ENCODE measurements at regions of chr10 and their contacts with region 1.

Region 1: DNA sequence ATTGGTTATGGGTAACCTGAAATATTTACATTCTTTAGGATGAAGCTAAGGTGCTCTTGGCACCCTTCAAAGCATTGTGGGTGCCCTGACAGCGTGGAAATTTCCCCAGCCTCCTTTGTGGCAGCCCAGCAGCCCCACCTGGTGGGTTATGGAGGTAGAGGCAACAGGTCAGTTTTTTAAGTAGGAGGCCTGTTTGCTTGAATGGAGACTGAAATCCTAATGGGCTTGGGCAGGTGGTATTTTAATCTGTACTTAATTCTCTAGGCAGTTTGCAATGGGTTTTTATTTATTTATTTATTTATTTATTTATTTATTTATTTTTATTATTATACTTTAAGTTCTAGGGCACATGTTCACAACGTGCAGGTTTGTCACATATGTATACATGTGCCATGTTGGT is 139.4 kb downstream of the EPC1 start:
- DNase-seq: peak; percentile 79 to 84
- H3K4me3 ChIP-seq: no peak overlapping the region
- H3K4me3 Mint-ChIP-seq: no peak overlapping the region
- H3K27ac Mint-ChIP-seq: no peak overlapping the region
- H3K4me1 ChIP-seq: peaks cover 5% of the 10 kb centered on the region; the same call in 1 of the 2 replicates
- H3K4me1 Mint-ChIP-seq: peaks cover 7% of the 10 kb centered on the region
- H3K27me3 ChIP-seq: no peaks in the 10 kb centered on the region
- H3K27me3 Mint-ChIP-seq: no peaks in the 10 kb centered on the region
- CTCF ChIP-seq: peak; percentile 90 to 97

Region 2: GRCh38 chr10:31864834-31865518 is 342.6 kb before region 1 on chr10:
- CTCF ChIA-PET with region 1: interaction called, 5 read pairs
- POLR2A ChIA-PET with region 1: no interaction called
- intact Hi-C with region 1: loop called (anchors 1 kb)
- DNase-seq: peak in 1 of 2 experiments; percentile 26
- H3K4me3 ChIP-seq: no peak overlapping the region
- H3K4me3 Mint-ChIP-seq: peak overlapping the region; percentile 9
- H3K27ac Mint-ChIP-seq: peak overlapping the region; percentile 5
- H3K4me1 ChIP-seq: peaks cover 24% of the 10 kb centered on the region
- H3K4me1 Mint-ChIP-seq: peaks cover 37% of the 10 kb centered on the region
- H3K27me3 ChIP-seq: no peaks in the 10 kb centered on the region
- H3K27me3 Mint-ChIP-seq: no peaks in the 10 kb centered on the region
- CTCF ChIP-seq: no peak

Region 3: DNA sequence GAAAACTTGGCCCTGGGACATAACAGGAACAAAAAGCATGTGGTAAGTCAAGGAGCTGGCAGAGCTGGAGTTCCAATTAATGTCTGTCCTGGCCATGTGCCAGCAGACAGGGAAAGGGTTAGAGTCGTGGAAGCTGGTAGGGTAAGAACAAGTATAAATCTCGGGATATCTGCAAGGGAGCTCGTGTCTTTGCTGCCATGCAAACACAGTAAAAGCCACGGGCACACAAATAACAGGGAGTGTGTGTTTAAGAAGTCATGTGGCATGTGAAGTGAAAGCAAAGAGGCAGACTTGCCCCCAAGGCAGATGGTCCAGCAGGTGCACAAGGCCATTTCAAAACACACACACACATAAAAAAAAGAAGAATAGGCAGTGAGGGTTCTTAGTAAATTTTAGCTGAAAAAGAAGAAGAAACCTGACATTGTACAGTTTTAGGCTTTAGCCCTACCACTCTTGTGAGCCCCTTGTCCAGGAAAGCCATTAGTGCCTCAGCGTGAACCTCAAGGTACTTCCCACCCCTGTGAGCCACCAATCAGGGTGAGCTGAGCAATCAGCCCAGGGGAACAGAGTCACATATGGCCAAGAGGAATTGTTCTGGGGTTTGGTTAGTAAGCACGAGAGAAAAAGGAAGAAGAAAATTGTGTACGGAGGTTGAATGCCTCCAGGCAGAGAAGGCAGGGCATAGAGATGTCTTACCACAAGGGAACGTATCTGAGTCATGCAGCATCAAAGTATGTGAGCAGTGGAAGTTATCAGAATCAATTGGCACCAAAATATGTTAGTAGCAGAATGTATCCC is 246.1 kb before region 1 on chr10:
- CTCF ChIA-PET with region 1: no interaction called
- POLR2A ChIA-PET with region 1: no interaction called
- intact Hi-C with region 1: loop called (anchors 1 kb)
- DNase-seq: no peak
- H3K4me3 ChIP-seq: no peak overlapping the region
- H3K4me3 Mint-ChIP-seq: no peak overlapping the region
- H3K27ac Mint-ChIP-seq: peak overlapping the region; percentile 94
- H3K4me1 ChIP-seq: peaks cover 46% of the 10 kb centered on the region
- H3K4me1 Mint-ChIP-seq: peaks cover 38% of the 10 kb centered on the region
- H3K27me3 ChIP-seq: no peaks in the 10 kb centered on the region
- H3K27me3 Mint-ChIP-seq: no peaks in the 10 kb centered on the region
- CTCF ChIP-seq: no peak

Region 4: GRCh38 chr10:32055813-32056600 is 151.5 kb before region 1 on chr10 and contains the start of gene KIF5B:
- CTCF ChIA-PET with region 1: interaction called, 5 read pairs
- POLR2A ChIA-PET with region 1: no interaction called
- intact Hi-C with region 1: loop called (anchors 2 kb)
- DNase-seq: peak; percentile 91 to 97
- H3K4me3 ChIP-seq: peak within 1 kb of the TSS; percentile 97
- H3K4me3 Mint-ChIP-seq: peak within 1 kb of the TSS; percentile 98
- H3K27ac Mint-ChIP-seq: peak within 1 kb of the TSS; percentile 90
- H3K4me1 ChIP-seq: peaks cover 58% of the 10 kb centered on the region
- H3K4me1 Mint-ChIP-seq: peaks cover 33% of the 10 kb centered on the region
- H3K27me3 ChIP-seq: no peaks in the 10 kb centered on the region
- H3K27me3 Mint-ChIP-seq: no peaks in the 10 kb centered on the region
- CTCF ChIP-seq: no peak
- total RNA-seq, gene KIF5B: 172 and 183 TPM in 2 replicates

Region 5: DNA sequence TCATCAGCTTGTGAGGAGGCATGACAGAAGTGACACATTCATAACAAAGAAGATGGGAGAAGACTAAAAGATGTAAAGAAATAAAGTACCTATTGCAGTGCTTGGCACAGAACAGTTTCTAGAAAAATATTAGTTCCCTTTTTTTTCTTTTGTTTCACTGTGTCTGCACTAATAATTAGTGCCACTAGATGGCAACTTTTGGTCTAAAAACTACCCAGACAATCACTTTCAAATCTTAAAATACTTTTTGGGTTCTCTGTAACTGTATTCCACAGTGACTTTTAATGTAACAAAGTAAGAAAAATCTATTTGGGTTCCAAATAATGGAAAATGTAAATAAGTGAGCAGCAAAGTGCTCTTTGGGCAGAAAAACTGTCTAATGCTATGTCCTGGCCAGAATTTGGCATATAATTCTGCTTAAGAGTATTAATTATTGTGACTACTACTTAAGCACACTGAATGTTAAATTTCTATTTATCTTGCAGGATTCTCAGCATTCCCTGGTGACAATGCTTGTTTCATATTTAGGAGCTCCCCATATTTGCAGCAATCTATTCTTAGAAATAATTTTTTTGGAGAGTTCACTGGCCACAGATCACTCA is 16.6 kb before region 1 on chr10:
- CTCF ChIA-PET with region 1: interaction called, 4 read pairs
- POLR2A ChIA-PET with region 1: no interaction called
- intact Hi-C with region 1: loop called (anchors 1 kb)
- DNase-seq: peak in 1 of 2 experiments; percentile 56
- H3K4me3 ChIP-seq: no peak overlapping the region
- H3K4me3 Mint-ChIP-seq: no peak overlapping the region
- H3K27ac Mint-ChIP-seq: no peak overlapping the region
- H3K4me1 ChIP-seq: peaks cover 24% of the 10 kb centered on the region
- H3K4me1 Mint-ChIP-seq: peaks cover 20% of the 10 kb centered on the region
- H3K27me3 ChIP-seq: no peaks in the 10 kb centered on the region
- H3K27me3 Mint-ChIP-seq: no peaks in the 10 kb centered on the region
- CTCF ChIP-seq: peak; percentile 70 to 75

Region 6: GRCh38 chr10:32346134-32346550 is 138.6 kb after region 1 on chr10:
- CTCF ChIA-PET with region 1: interaction called, 5 read pairs
- POLR2A ChIA-PET with region 1: no interaction called
- intact Hi-C with region 1: loop called (anchors 1 kb)
- DNase-seq: peak; percentile 99
- H3K4me3 ChIP-seq: peak overlapping the region; percentile 80
- H3K4me3 Mint-ChIP-seq: peak overlapping the region; percentile 89
- H3K27ac Mint-ChIP-seq: peak overlapping the region; percentile 100
- H3K4me1 ChIP-seq: peaks cover 42% of the 10 kb centered on the region
- H3K4me1 Mint-ChIP-seq: peaks cover 39% of the 10 kb centered on the region
- H3K27me3 ChIP-seq: no peaks in the 10 kb centered on the region
- H3K27me3 Mint-ChIP-seq: no peaks in the 10 kb centered on the region
- CTCF ChIP-seq: peak; percentile 95 to 99